Activated CD4-positive, alpha-beta T cell treated with anti-CD3 and anti-CD28 coated beads, Interleukin-2, amount 10 ng/mL, durations not matched to agents 24 days and 14 days (primary cell): ENCODE measurements at regions of chr2 and their contacts with region 1.

Region 1: GRCh38 chr2:171922230-171923022 is at the start of gene HAT1:
- DNase-seq: peak; percentile 99
- H3K4me3 Mint-ChIP-seq: peak within 1 kb of the TSS; percentile 99
- H3K27ac Mint-ChIP-seq: peak within 1 kb of the TSS; percentile 95
- H3K4me1 Mint-ChIP-seq: peaks cover 28% of the 10 kb centered on the region
- H3K27me3 Mint-ChIP-seq: no peaks in the 10 kb centered on the region
- total RNA-seq, gene HAT1: 74.6 and 77.1 TPM in 2 replicates

Region 2: GRCh38 chr2:170361090-170361936 is 1561.1 kb before region 1 on chr2:
- intact Hi-C with region 1: loop called (anchors 10 kb)
- DNase-seq: peak; percentile 87
- H3K4me3 Mint-ChIP-seq: peak overlapping the region; percentile 40
- H3K27ac Mint-ChIP-seq: peak overlapping the region; percentile 97
- H3K4me1 Mint-ChIP-seq: peaks cover 38% of the 10 kb centered on the region
- H3K27me3 Mint-ChIP-seq: peaks cover 4% of the 10 kb centered on the region

Region 3: DNA sequence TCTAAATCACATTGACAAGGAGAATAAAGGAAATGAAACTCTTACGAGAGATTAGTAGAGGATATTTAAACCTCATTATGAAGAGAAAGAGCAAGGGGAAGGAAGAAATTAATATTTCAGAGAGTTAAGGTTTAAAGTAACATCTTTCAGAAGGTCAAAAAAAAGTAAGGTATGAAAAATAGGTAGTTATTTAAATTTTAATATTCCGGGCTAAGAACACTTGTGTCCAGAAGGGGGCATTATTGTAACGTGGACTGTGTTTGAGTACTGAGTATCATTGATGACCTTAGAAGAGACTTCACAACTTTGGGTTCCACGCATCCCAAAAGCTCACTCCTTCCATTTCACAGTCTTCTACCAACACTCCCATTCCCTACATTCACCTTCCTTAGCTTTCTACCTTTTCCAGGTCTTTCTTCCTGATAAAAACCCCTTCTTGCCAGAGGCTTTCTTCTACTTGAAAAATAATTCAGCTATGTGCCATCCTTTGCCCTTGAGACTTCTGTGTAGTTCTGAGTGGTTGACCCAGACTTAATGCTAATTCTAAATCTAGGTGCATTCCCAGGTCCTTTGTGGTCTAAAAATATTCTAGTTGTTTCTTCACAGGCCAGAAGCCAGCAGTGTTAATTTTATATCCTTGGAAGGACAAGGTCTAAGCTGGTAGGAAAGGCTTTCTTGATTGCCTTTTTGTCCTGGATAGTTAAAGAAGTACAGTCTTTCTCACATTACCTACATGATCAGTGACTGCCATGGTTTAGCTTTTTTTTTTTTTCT is 218.7 kb before region 1 on chr2:
- intact Hi-C with region 1: loop called (anchors 10 kb)
- DNase-seq: peak; percentile 66
- H3K4me3 Mint-ChIP-seq: no peak overlapping the region
- H3K27ac Mint-ChIP-seq: no peak overlapping the region
- H3K4me1 Mint-ChIP-seq: peaks cover 3% of the 10 kb centered on the region
- H3K27me3 Mint-ChIP-seq: no peaks in the 10 kb centered on the region

Region 4: DNA sequence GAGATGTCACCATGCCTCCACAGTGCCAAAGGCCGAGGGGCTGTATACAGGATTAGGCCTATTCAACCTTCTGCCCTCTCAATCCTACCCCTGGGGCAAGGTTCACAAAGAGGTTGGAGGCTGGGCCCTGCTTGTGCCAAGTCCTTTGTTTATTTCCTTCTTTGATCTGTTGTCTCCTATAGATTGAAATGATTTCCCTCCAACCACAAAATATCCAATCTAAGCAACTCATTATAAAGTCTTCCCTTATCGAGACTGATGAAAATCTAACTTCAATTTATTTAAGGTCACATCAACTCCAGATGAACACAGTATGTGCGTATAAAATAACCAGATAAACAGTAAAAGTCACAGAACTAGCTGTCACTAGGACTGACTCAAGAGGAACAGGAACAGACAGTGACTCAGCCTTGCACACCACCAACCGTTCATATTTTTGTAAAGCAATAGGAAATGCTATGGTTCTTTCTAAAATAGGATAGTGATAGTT is 124.1 kb before region 1 on chr2:
- intact Hi-C with region 1: loop called (anchors 10 kb)
- DNase-seq: peak; percentile 52
- H3K4me3 Mint-ChIP-seq: no peak overlapping the region
- H3K27ac Mint-ChIP-seq: peak overlapping the region; percentile 75
- H3K4me1 Mint-ChIP-seq: peaks cover 28% of the 10 kb centered on the region
- H3K27me3 Mint-ChIP-seq: no peaks in the 10 kb centered on the region

Region 5: DNA sequence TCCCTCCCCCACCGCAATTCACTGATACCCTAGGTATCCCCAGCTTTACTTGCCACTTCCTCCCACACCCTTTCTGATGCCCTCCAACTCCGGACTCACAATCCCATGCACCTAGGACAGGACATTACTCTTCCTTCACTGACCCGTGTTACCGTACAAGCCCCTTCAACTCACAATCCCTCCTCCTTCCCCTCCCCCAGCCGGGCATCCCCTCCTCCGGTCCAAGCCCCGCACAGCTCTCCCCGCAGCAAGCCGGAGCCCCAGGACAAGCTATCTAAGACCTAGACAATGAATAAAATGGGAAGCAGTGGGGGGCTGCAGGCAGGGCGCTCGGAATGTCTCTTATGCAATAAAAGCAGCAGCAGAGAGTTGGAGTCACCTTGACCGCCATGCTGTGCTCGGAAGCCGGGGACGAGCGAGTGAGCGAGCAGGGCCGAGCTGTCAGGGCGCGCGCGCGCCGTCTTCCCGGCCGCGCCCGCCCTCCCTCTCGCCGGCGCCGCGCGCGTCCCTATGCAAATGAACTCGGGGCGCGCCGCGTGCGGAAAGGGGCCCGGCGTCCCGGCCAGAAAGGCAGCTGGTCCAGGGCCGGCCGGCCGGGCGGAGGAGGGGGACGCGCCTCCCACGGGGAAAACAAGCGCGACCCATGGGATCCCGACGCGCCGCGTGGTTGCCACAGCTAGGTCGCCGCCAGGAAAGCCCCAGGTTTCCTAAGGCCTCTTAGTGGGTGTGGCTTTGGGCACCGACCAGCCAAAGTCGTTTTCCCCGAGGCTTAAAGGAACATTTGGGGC is 28.4 kb before region 1 on chr2 and contains the start of gene SLC25A12:
- intact Hi-C with region 1: loop called (anchors 1 kb)
- DNase-seq: peak; percentile 94
- H3K4me3 Mint-ChIP-seq: peak within 1 kb of the TSS; percentile 95
- H3K27ac Mint-ChIP-seq: peak within 1 kb of the TSS; percentile 92
- H3K4me1 Mint-ChIP-seq: peaks cover 40% of the 10 kb centered on the region
- H3K27me3 Mint-ChIP-seq: peaks cover 2% of the 10 kb centered on the region
- total RNA-seq, gene SLC25A12: 30.9 and 34.3 TPM in 2 replicates

Region 6: DNA sequence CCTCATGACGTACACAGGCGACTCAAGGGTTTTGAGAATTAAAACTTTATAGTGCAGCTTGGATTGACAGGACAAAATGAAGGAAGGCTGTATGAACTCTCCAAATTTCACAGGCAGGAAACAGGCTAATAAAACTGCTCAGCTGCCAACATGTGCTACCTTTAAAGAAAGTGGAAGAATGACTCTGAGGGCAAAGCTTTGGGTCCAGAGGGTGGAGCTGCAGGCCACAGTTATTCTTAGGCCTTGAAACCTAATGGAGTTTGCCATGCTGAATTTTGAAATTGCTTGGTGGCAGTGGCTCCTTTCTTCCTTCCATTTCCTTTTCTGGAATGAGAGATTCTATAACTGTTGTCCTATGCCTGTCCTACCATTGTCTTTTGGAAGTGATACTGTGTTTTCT is 34.6 kb after region 1 on chr2:
- intact Hi-C with region 1: loop called (anchors 5 kb)
- DNase-seq: no peak
- H3K4me3 Mint-ChIP-seq: no peak overlapping the region
- H3K27ac Mint-ChIP-seq: no peak overlapping the region
- H3K4me1 Mint-ChIP-seq: peaks cover 30% of the 10 kb centered on the region
- H3K27me3 Mint-ChIP-seq: no peaks in the 10 kb centered on the region

Region 7: GRCh38 chr2:171999604-172000469 is 77.4 kb after region 1 on chr2 and contains the start of gene METAP1D:
- intact Hi-C with region 1: loop called (anchors 1 kb)
- DNase-seq: peak; percentile 97
- H3K4me3 Mint-ChIP-seq: peak within 1 kb of the TSS; percentile 94
- H3K27ac Mint-ChIP-seq: peak within 1 kb of the TSS; percentile 100
- H3K4me1 Mint-ChIP-seq: peaks cover 19% of the 10 kb centered on the region
- H3K27me3 Mint-ChIP-seq: peaks cover 23% of the 10 kb centered on the region
- total RNA-seq, gene METAP1D: 5.0 and 8.1 TPM in 2 replicates